Posterior vena cava (tissue), 2 donors: ENCODE measurements at regions of chr9 and their contacts with region 1.

Region 1: DNA sequence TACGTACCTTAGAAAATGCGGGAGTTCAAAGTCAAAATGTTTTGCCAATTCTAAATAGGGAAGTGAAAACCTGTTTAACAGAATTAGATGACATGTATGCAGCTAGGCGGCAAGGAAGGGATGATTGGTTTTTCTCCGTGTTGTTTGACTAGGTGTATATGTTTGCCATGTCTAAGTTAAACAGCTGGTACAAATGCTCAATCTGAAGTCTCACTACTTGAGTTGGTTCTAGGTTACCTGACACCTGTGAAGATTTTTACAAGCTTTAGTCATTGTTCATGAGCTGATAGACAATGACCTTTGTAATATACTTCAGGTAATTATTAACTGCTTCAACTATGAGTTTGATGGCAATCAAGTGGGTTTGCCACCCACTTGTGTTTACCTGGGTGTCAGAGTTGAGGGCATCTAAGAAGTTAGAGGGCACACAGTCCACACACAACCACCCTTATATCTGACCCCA is 74.3 kb downstream of the SLC44A1 start:
- DNase-seq: no peak

Region 2: DNA sequence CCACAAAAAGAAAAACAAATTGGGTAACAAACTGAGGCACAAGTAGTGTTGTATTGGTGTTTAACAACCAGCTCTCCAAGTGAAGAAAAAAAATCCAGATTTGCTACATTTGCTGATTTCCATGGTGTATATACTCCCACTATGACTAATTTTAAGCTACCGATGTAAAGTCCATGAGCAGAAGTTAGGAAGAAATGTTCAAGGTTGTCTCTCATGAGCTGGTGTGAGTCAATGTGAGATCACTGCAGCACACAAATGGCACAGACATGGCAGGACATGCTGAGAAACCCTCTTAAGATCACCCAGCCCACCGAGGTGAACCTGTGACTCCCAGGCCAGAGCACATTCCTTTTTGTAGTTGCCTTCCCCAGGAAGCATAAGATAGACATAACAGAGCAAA is 38.1 kb before region 1 on chr9:
- intact Hi-C with region 1: loop called in 1 of 2 experiments (anchors 1 kb)
- DNase-seq: no peak

Region 3: DNA sequence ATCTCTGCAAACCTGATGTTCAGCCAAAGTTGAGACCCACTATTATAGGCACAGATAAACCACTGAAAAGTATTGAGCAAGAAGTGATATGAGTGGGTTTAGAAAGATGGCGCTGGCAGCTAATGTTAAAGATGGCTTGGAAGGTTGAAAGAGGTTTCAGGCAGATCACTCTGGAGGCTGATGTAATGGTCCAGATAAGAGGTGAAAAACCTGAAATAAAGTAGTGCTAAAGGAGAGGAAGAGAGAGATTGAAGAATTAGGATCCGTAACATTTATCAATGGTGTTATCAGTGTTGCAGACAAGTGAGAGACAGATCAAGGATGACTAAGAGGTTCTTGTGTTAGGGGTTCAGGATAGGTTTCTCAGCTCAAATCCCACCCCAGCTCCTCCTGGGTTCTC is 16.0 kb before region 1 on chr9:
- intact Hi-C with region 1: loop called in 1 of 2 experiments (anchors 2 kb)
- DNase-seq: no peak

Region 4: DNA sequence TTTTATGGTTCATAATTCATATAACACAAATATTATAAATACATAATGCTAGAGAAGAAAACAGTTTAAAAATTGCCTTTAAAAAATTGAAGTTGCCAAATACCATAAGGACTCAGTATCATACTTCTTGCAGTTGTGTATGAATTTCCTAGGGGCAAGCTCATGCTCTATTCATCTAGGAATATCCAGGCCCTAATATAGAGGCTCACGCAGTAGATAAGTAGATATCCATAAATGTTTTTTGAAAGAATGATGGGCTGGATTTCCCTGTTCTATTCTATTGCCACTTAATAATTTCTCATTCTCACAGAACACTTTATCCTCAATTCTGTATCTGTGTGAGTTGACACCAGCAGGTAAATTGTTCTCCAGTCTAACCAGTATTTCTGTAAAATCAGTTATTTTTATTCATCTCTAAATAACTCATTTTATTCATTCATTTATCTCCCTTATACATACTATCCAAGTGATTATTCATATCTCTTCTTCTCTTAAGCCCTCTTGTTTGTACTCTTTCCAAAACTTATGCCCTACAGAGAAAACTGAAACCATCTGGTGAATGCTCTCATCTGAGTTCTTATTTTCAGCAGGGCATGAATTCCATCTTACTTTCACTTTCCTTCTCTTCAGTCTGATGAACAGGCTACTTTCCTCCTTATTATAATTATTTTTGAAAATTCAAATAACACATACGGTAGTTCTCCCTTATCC is 22.8 kb after region 1 on chr9:
- intact Hi-C with region 1: no loop called
- DNase-seq: no peak